Activated CD8-positive, alpha-beta T cell treated with anti-CD3 and anti-CD28 coated beads, Interleukin-2, amount 10 ng/mL, durations not matched to agents 7 days and 5 days (primary cell): ENCODE measurements at regions of chr6 and their contacts with region 1.

Region 1: DNA sequence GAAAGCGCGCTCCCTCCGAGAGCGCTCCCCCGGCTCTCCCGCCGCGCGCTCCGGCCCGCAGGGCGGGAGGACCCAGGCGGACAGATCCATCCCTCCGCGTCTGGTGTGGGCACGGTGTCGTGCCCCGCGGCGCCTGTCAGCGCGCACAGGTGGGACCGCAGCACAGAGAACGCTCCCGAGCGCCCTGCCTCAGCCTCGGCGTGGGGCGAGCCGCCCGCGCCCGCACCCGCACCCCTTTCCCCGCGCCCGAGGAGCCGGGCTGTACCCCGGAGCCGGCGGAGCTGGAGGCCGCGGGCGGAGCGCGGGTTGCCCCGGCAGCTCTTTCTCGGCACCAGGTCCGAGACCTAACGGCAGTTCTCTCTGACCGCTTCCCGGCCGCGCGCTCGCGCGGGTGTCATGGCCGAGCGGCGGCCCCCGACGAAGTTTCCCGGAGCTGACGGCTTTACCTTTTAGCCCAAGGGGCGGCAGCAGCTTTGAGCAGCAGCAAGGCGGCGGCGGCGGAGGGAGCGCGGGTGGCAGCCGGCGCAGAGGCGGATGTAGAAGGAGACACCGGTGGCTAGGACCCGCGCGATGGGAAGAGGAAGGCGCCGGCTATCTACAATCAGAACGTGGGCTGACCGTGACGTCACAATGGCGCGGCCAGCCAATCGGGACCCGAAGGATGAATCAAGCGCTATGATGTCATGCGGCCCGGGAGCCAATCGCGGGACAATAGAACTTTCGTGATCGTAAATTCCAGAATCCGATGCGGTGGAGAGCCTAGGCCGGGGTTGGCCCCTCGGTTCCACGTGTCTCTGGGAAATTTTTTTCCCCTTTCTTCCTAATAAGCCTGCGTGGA is at the start of gene ELOVL5:
- DNase-seq: peak; percentile 98
- ATAC-seq: peak; percentile 80
- H3K4me3 Mint-ChIP-seq: peak within 1 kb of the TSS; percentile 96
- H3K27ac Mint-ChIP-seq: peak within 1 kb of the TSS; percentile 92
- H3K4me1 Mint-ChIP-seq: peaks cover 46% of the 10 kb centered on the region
- H3K27me3 Mint-ChIP-seq: peaks cover 21% of the 10 kb centered on the region
- total RNA-seq, gene ELOVL5: 116 TPM

Region 2: GRCh38 chr6:53302678-53303360 is 45.8 kb before region 1 on chr6:
- CTCF ChIA-PET with region 1: interaction called, 10 read pairs
- POLR2A ChIA-PET with region 1: interaction called, 13 read pairs
- DNase-seq: peak; percentile 35
- ATAC-seq: peak; percentile 68
- H3K4me3 Mint-ChIP-seq: peak overlapping the region; percentile 67
- H3K27ac Mint-ChIP-seq: peak overlapping the region; percentile 77
- H3K4me1 Mint-ChIP-seq: peaks cover 72% of the 10 kb centered on the region
- H3K27me3 Mint-ChIP-seq: no peaks in the 10 kb centered on the region

Region 3: DNA sequence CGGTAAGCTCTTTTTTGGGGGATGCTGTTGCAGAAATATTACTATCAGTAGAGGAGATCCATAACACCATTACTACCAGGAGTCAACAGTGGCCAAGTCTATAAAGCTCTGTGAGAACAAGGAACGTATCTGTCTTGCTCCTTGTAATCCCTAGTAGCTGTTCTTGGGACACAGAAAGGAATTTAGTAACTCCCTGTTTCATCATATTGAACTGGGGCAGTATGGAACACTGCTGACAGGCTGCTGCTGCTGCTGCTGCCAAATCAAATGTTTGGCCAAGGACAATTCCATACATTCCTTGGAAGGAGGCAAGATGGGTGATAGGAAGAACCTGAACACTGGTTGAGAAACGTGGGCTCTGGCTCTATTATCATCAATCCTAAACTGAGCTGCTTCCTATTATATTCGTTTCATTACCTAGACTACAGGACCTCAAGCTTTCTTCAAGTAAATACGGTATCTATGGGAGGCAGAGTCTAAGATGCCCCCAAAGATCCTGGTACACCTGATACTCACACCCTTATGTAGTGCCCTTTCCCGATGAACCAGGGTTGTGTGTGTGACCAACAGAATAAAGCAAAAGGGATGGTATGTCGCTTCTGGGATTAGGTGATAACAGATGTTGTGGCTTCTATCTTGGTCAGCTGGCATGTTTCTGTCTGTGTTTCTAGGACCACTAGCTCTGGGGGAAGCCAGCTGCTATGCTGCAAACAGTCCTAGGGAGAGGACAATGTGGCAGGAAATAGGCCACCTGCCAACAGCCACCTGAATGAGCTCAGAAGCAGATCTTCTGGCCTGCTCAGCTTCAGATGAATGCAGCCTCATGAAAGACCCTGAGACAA is 39.3 kb before region 1 on chr6:
- CTCF ChIA-PET with region 1: interaction called, 10 read pairs
- POLR2A ChIA-PET with region 1: interaction called, 28 read pairs
- DNase-seq: no peak
- ATAC-seq: peak; percentile 46
- H3K4me3 Mint-ChIP-seq: no peak overlapping the region
- H3K27ac Mint-ChIP-seq: peak overlapping the region; percentile 45
- H3K4me1 Mint-ChIP-seq: peaks cover 80% of the 10 kb centered on the region
- H3K27me3 Mint-ChIP-seq: no peaks in the 10 kb centered on the region

Region 4: DNA sequence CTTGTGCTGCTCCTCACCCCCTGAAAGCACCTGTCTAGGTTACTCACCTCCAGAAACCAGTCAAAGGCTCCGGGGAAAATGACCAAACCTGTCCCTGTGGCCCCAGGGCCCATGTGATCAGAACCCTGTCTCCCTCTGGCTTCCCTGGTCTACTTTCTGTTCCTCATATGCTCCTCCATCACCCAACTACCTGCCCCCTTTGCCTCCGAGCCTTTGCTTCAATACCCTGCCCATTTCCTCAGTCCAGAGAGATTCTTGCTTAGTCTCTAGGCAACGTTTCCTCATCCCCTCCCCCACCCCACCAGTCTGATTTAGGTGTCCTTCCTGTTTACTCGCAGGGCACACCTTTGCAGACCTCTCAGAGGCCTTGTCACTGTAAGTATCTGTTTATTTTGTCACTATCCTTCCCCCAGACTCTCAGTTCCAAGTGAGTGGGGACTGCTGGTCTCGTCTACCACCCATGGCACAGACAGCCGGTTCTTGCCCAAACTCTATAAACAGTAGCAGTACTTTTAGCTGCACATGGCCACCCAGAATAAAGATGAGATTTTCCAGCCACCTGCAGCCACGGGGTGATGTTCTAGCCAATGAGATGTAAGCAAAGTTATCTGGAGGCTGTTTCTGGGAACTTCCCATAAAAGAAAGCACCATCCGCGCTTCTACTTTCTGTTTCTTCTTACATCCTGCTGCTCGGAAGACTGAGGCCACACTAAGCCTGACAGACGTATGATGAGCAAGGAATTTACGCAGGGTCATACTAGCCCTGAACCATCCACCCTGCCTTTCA is 13.2 kb before region 1 on chr6:
- CTCF ChIA-PET with region 1: interaction called, 39 read pairs
- POLR2A ChIA-PET with region 1: interaction called, 61 read pairs
- DNase-seq: peak; percentile 84
- ATAC-seq: peak; percentile 78
- H3K4me3 Mint-ChIP-seq: peak overlapping the region; percentile 75
- H3K27ac Mint-ChIP-seq: peak overlapping the region; percentile 94
- H3K4me1 Mint-ChIP-seq: peaks cover 82% of the 10 kb centered on the region
- H3K27me3 Mint-ChIP-seq: no peaks in the 10 kb centered on the region

Region 5: DNA sequence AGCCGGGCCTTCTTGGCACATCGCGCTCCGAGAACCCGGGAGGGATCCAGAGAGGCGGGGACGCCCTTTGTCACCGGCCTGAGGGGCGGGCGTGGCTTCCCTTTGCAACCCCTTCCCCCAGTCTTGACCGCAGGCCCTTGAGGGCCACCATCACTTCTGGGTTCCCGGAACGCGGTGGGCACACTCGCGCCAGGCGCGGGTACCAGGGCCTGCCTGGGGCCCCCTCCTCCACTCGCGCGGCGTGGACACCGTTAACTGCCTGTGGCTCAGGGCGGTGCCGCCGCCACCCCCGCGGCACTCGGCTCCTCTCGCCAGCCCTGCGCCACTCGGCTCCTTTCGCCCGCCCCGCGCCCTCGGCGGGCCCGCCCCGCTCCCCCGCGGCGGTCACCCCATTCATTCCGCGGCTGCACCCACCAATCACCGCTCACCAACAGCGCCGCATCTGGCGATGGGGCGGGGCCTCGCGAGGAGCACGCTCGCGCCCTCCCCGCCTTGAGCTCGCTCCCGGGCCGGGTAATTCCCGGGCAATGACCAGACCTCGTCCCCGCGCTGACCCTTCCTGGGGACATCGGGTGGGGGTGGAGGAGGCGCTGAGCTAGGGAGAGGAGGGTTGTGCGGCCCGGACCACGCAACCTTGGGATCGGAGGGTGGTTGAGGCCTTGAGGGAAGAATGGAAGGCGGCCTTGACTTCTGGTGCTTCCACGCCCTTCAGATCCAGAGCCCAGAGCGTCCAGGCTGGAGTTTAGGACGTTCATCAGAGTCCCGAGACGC is 10.7 kb after region 1 on chr6:
- CTCF ChIA-PET with region 1: interaction called, 10 read pairs
- POLR2A ChIA-PET with region 1: interaction called, 122 read pairs
- DNase-seq: peak; percentile 92
- ATAC-seq: peak; percentile 96
- H3K4me3 Mint-ChIP-seq: peak overlapping the region; percentile 87
- H3K27ac Mint-ChIP-seq: peak overlapping the region; percentile 98
- H3K4me1 Mint-ChIP-seq: peaks cover 47% of the 10 kb centered on the region
- H3K27me3 Mint-ChIP-seq: peaks cover 6% of the 10 kb centered on the region